ENCODE measurements at regions of chr10 and their contacts with region 1.

Region 1: DNA sequence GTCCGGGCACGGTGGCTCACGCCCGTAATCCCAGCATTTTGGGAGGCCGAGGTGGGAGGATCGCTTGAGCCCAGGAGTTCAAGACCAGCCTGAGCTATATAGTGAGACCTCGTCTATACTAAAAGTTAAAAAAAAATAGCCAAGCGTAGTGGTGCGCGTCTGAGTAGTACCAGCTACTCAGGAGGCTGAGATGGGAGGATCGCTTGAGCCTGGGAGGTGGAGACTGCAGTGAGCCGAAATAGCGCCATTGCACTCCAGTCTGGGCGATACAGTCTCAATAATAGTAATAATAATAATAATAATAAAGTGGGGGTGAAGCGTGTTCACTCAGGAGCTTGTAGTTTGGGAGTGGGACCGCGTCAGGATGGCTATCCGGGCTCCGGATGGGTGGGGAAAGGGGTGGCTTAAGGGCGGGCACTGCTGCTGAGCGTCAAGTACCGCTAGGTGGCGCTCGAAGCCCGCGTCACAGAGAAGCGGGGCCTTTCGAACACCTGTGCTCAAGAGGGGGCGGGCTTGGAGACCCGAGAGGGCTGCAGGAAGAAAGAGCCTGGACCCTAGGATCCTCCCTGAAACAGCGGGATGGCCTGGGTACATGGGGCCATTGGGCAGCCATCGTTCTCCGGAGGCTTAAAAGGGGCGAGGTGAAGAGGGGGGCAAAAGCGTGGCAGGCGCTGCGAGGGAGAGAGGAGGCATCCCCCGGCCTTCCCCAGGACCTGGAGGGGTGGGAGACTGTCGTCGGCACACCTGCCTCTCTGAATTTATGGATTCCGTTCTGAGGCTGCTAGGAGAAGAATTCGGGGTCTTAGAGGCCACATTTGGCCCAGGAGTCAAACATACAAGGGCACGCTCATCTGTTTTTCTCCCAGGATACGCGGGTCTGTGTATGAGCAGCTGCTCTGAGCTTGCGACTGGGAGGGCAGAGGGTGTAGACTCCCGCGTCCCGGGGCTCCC is 14.5 kb downstream of the LBX1 start:
- DNase-seq: peak; percentile 45 to 77 (median 65)
- ATAC-seq: peak; percentile 69 to 85 (median 78)
- H3K4me3 ChIP-seq: peak overlapping the region in 1 of 12 donors; percentile 3
- H3K27ac ChIP-seq: no peak overlapping the region
- H3K4me1 ChIP-seq: peaks cover 0 to 47% (median 29%) of the 10 kb centered on the region in 12 donors
- H3K27me3 ChIP-seq: peaks cover 51 to 100% (median 92%) of the 10 kb centered on the region in 9 donors
- CTCF ChIP-seq: peak; percentile 82 to 93 (median 87)
- POLR2A ChIP-seq: no peak

Region 2: GRCh38 chr10:100962351-100963080 is 252.2 kb before region 1 on chr10:
- intact Hi-C with region 1: no loop called
- DNase-seq: no peak
- ATAC-seq: no peak
- H3K4me3 ChIP-seq: no peak overlapping the region
- H3K27ac ChIP-seq: no peak overlapping the region
- H3K4me1 ChIP-seq: no peaks in the 10 kb centered on the region
- H3K27me3 ChIP-seq: no peaks in the 10 kb centered on the region
- CTCF ChIP-seq: no peak
- POLR2A ChIP-seq: no peak

Region 3: GRCh38 chr10:101291331-101292193 is 76.8 kb after region 1 on chr10:
- intact Hi-C with region 1: loop called in 8 of 10 experiments (anchors 2 to 10 kb)
- DNase-seq: peak; percentile 50 to 78 (median 70)
- ATAC-seq: peak in 3 of 4 donors; percentile 66 to 85 (median 77)
- H3K4me3 ChIP-seq: peak overlapping the region; percentile 46 to 84 (median 62)
- H3K27ac ChIP-seq: peak overlapping the region in 9 of 12 donors; percentile 44 to 78 (median 63)
- H3K4me1 ChIP-seq: peaks cover 0 to 25% (median 8%) of the 10 kb centered on the region in 12 donors
- H3K27me3 ChIP-seq: peaks cover 5 to 80% (median 24%) of the 10 kb centered on the region in 9 donors
- CTCF ChIP-seq: peak; percentile 49 to 75 (median 64)
- POLR2A ChIP-seq: no peak

Region 4: DNA sequence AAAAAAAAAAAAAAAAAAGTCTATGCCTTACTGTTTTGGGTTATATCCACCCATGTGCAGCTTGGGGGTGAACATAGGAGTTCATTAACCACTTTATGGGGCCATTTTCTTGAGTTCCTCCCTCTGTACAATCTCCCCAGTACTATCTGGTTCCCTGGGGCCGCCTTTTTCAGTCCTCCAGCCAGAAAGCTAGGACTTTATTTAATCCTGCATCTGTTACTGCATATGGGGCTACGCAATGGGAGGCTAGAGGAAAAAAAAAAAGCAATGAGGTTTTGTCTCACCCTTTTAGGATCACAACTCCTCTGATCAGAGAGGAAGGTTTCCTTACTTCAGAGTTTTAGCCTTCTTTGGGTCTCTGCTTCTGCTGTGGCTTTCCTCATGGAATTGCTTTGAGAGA is 190.3 kb after region 1 on chr10:
- intact Hi-C with region 1: no loop called
- DNase-seq: no peak
- ATAC-seq: no peak
- H3K4me3 ChIP-seq: no peak overlapping the region
- H3K27ac ChIP-seq: no peak overlapping the region
- H3K4me1 ChIP-seq: peaks cover 0 to 22% (median 1%) of the 10 kb centered on the region in 12 donors
- H3K27me3 ChIP-seq: no peaks in the 10 kb centered on the region
- CTCF ChIP-seq: no peak
- POLR2A ChIP-seq: no peak

Region 5: GRCh38 chr10:101441541-101442455 is 227.1 kb after region 1 on chr10:
- intact Hi-C with region 1: loop called in 3 of 10 experiments (anchors 5 kb)
- DNase-seq: peak in 2 of 5 donors; percentile 10 to 25
- ATAC-seq: peak; percentile 65 to 89 (median 86)
- H3K4me3 ChIP-seq: no peak overlapping the region
- H3K27ac ChIP-seq: no peak overlapping the region
- H3K4me1 ChIP-seq: peaks cover 0 to 29% (median 8%) of the 10 kb centered on the region in 12 donors
- H3K27me3 ChIP-seq: no peaks in the 10 kb centered on the region
- CTCF ChIP-seq: peak; percentile 30 to 68 (median 55)
- POLR2A ChIP-seq: no peak

Region 6: GRCh38 chr10:101563497-101564040 is 348.8 kb after region 1 on chr10:
- intact Hi-C with region 1: loop called in 3 of 10 experiments (anchors 2 to 5 kb)
- DNase-seq: peak in 1 of 5 donors; percentile 15
- ATAC-seq: no peak
- H3K4me3 ChIP-seq: no peak overlapping the region
- H3K27ac ChIP-seq: no peak overlapping the region
- H3K4me1 ChIP-seq: peaks cover 0 to 13% (median 0%) of the 10 kb centered on the region in 12 donors
- H3K27me3 ChIP-seq: peaks cover 5 to 47% (median 32%) of the 10 kb centered on the region in 9 donors
- CTCF ChIP-seq: no peak
- POLR2A ChIP-seq: no peak

Region 7: GRCh38 chr10:101782811-101783735 is 568.4 kb after region 1 on chr10 and contains the start of gene NPM3:
- intact Hi-C with region 1: loop called in 7 of 10 experiments (anchors 2 to 10 kb)
- DNase-seq: peak; percentile 81 to 87 (median 85)
- ATAC-seq: peak; percentile 60 to 81 (median 77)
- H3K4me3 ChIP-seq: peak within 1 kb of the TSS; percentile 25 to 84 (median 66)
- H3K27ac ChIP-seq: peak within 1 kb of the TSS in 8 of 12 donors; percentile 20 to 68 (median 40)
- H3K4me1 ChIP-seq: peaks cover 0 to 55% (median 38%) of the 10 kb centered on the region in 12 donors
- H3K27me3 ChIP-seq: peaks cover 0 to 18% (median 5%) of the 10 kb centered on the region in 9 donors
- CTCF ChIP-seq: no peak
- POLR2A ChIP-seq: no peak
- total RNA-seq, gene NPM3: 5.9 to 23.1 (median 8.3) TPM